ENCODE measurements at regions of chr17 and their contacts with region 1.

Region 1: DNA sequence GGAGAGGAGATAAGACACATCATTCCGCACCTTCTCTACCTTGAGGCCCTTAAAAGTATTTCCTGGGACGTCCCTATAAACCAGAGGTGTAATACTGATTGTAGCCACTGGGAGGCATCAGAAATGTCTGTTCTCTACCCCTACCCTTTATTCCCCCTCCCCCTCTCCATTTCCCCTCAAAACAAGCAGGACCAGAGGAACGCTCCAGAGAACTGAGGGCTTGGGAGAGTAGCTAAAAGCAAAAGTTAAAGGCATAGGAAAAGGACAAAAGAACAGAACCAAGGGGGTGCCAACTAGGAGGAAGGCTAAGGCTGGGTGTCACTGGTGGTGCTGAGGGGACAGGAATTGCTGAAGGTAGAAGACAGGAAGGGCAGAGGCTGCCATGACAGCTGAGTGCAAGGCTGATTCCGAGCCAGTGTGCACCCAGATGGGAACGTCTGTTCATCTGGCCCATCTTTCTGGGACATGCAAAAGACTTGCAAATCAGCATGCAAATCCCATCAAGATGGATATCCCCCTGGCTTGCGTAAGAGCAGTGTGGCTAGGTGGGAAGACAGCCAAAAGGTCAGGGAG is 6.7 kb downstream of the CAMTA2 start:
- DNase-seq: no peak
- H3K4me3 ChIP-seq: no peak overlapping the region
- H3K27ac ChIP-seq: no peak overlapping the region
- H3K4me1 ChIP-seq: no peaks in the 10 kb centered on the region
- H3K27me3 ChIP-seq: no peaks in the 10 kb centered on the region
- CTCF ChIP-seq: peak; percentile 46 to 60 (median 47)
- EP300 ChIP-seq: no peak
- POLR2A ChIP-seq: no peak

Region 2: DNA sequence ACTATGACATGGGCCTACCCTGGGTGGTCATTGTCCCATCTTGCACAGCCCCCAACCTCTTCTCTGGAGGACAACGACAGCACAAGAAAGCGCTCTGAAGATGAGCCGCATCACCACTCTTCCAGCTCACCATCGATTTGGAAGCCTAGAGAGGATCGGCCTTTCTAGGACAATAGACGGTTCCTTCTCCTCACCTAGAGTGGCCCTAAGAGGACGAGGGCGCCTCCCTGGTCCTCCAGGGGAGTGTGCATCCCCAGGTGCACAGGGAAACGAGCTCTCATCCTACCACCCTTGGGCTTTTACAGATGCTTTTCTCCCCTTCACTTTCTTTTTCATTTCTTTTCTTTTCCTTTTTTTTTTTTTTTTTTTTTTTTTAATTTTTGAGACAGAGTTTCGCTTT is 74.8 kb after region 1 on chr17:
- intact Hi-C with region 1: loop called in 1 of 4 experiments (anchors 5 kb)
- DNase-seq: no peak
- H3K4me3 ChIP-seq: no peak overlapping the region
- H3K27ac ChIP-seq: no peak overlapping the region
- H3K4me1 ChIP-seq: no peaks in the 10 kb centered on the region
- H3K27me3 ChIP-seq: no peaks in the 10 kb centered on the region
- CTCF ChIP-seq: no peak
- EP300 ChIP-seq: no peak
- POLR2A ChIP-seq: no peak

Region 3: DNA sequence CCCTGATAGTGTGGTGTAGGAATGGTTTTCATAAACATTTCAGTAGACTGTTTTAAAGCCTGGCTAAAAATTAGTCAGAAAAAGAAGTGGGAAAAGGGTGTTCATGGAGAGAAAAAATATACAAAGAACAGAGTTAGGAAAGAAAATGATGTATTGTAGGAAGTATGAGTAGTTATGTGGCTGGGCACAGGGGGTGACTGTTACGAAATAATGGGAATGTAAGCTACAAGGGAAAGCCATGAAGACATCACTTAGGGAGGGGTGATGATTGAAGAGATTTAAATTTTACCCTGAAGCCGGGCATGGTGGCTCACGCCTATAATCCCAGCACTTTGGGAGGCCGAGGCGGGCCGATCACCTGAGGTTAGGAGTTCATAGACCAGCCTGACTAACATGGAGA is 383.4 kb after region 1 on chr17:
- intact Hi-C with region 1: no loop called
- DNase-seq: no peak
- H3K4me3 ChIP-seq: no peak overlapping the region
- H3K27ac ChIP-seq: no peak overlapping the region
- H3K4me1 ChIP-seq: no peaks in the 10 kb centered on the region
- H3K27me3 ChIP-seq: no peaks in the 10 kb centered on the region
- CTCF ChIP-seq: no peak
- EP300 ChIP-seq: no peak
- POLR2A ChIP-seq: no peak